ENCODE measurements at regions of chr2 and their contacts with region 1.

Region 1: DNA sequence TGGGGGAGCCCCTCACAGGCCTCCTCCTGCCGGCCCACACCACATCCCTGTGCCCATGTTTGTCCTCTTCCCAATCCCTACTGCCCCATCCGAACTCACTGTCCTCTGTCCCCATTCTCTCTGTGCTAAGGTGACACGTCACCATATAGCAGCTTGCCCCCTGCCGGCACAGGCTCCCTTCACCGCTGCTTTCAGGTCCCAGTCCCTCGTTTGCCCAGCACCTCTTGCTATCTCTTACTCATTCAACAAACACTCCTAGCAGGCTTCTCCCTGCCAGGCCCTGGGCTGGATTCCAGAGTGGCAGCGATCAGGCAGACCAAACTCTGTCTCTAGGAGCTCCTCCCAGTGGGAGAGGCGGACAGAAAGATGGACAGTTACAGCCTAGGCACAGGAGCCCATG is 74.3 kb downstream of the TFCP2L1 start:
- DNase-seq: peak; percentile 70 to 72
- H3K4me3 ChIP-seq: no peak overlapping the region
- H3K4me3 Mint-ChIP-seq: peak overlapping the region; percentile 42
- H3K27ac Mint-ChIP-seq: peak overlapping the region; percentile 51
- H3K4me1 ChIP-seq: peaks cover 40% of the 10 kb centered on the region
- H3K4me1 Mint-ChIP-seq: peaks cover 29% of the 10 kb centered on the region
- H3K27me3 ChIP-seq: no peaks in the 10 kb centered on the region
- H3K27me3 Mint-ChIP-seq: no peaks in the 10 kb centered on the region
- CTCF ChIP-seq: peak; percentile 21 to 37

Region 2: DNA sequence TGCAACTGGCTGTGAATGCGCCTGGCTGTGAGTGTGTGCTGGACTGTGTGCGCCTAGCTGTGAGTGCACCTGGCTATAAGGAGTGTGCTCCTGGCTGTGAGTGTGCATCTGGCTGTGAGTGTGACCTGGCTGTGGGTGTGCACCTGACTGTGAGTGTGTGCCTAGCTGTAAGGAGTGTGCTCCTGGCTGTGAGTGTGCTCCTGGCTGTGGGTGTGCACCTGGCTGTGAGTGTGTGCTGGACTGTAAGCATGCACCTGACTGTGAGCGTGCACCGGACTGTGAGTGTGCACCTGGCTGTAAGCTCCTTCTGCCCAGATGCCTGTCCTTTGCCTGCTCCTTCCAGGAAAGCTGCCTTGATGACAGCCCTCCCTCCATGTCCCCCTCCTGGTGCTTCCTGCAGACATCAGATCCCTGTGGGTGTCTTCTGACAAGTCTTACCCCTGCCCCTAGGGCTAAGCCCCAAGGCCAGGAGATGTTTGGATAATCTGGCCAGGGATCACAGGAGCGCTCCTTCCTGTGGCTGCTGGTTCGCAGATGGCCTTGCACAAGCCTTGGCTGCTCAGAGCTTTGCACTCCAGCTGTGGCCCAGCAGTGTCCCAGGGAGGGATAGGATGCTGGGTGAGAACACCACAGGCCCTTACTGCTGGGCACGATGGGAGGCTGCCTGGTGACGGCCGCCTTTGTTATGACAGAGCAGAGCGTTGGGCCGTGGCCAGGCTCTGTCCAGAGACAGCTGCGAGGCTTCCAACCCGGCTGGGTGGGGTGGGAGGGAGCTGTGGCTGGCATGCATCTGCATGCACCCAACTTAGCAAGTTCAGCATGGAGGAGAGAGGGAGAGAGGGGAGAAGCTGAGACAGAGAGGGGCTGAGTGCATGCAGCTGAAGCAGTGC is 385.1 kb before region 1 on chr2:
- CTCF ChIA-PET with region 1: no interaction called
- POLR2A ChIA-PET with region 1: no interaction called
- intact Hi-C with region 1: no loop called
- DNase-seq: no peak
- H3K4me3 ChIP-seq: no peak overlapping the region
- H3K4me3 Mint-ChIP-seq: no peak overlapping the region
- H3K27ac Mint-ChIP-seq: no peak overlapping the region
- H3K4me1 ChIP-seq: no peaks in the 10 kb centered on the region
- H3K4me1 Mint-ChIP-seq: no peaks in the 10 kb centered on the region
- H3K27me3 ChIP-seq: no peaks in the 10 kb centered on the region
- H3K27me3 Mint-ChIP-seq: no peaks in the 10 kb centered on the region
- CTCF ChIP-seq: no peak

Region 3: GRCh38 chr2:121185571-121186074 is 25.1 kb before region 1 on chr2:
- CTCF ChIA-PET with region 1: interaction called, 6 read pairs
- POLR2A ChIA-PET with region 1: no interaction called
- intact Hi-C with region 1: loop called (anchors 2 kb)
- DNase-seq: no peak
- H3K4me3 ChIP-seq: no peak overlapping the region
- H3K4me3 Mint-ChIP-seq: no peak overlapping the region
- H3K27ac Mint-ChIP-seq: no peak overlapping the region
- H3K4me1 ChIP-seq: no peaks in the 10 kb centered on the region
- H3K4me1 Mint-ChIP-seq: no peaks in the 10 kb centered on the region
- H3K27me3 ChIP-seq: no peaks in the 10 kb centered on the region
- H3K27me3 Mint-ChIP-seq: no peaks in the 10 kb centered on the region
- CTCF ChIP-seq: no peak

Region 4: DNA sequence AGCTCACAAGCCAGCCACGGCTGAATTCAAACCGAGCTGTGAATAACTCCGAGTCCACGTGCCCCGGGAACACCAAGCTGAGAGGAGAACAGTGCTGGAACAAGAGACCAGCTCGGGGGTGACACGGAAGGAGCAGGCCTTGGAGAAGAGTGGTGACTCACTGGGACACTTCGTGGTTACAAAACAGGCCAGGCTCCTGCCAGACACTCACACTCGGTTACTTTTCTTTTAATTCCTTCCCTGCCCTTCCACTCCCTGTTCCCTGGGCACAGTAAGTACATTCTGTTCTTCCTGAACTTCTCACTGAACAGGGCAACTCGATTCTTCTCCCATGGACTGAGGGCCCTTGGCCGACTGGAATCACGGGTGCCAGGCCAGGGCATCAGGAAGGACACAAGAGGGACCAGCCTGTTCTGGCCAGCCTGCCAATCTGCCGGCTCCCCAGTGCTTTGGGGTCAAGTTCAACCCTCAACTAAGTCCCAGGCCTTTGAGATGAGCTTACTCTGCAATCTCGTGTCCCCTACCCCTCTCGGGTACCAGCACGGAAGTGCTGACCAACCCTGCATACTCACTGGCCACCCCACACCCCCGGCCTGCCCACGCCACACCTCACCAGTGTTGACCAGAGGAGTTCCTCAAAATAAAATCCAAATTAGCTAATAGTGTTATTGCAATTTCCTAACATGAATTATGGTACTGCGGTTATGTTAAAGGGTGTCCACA is 13.2 kb before region 1 on chr2:
- CTCF ChIA-PET with region 1: no interaction called
- POLR2A ChIA-PET with region 1: no interaction called
- intact Hi-C with region 1: no loop called
- DNase-seq: no peak
- H3K4me3 ChIP-seq: no peak overlapping the region
- H3K4me3 Mint-ChIP-seq: no peak overlapping the region
- H3K27ac Mint-ChIP-seq: no peak overlapping the region
- H3K4me1 ChIP-seq: no peaks in the 10 kb centered on the region
- H3K4me1 Mint-ChIP-seq: peaks cover 5% of the 10 kb centered on the region
- H3K27me3 ChIP-seq: no peaks in the 10 kb centered on the region
- H3K27me3 Mint-ChIP-seq: no peaks in the 10 kb centered on the region
- CTCF ChIP-seq: no peak

Region 5: GRCh38 chr2:121272581-121273515 is 62.2 kb after region 1 on chr2:
- CTCF ChIA-PET with region 1: no interaction called
- POLR2A ChIA-PET with region 1: no interaction called
- intact Hi-C with region 1: loop called (anchors 1 kb)
- DNase-seq: peak; percentile 66 to 78
- H3K4me3 ChIP-seq: no peak overlapping the region
- H3K4me3 Mint-ChIP-seq: peak overlapping the region; percentile 37
- H3K27ac Mint-ChIP-seq: peak overlapping the region; percentile 68
- H3K4me1 ChIP-seq: peaks cover 33% of the 10 kb centered on the region
- H3K4me1 Mint-ChIP-seq: peaks cover 18% of the 10 kb centered on the region
- H3K27me3 ChIP-seq: no peaks in the 10 kb centered on the region
- H3K27me3 Mint-ChIP-seq: no peaks in the 10 kb centered on the region
- CTCF ChIP-seq: no peak

Region 6: GRCh38 chr2:121283670-121284462 is 73.2 kb after region 1 on chr2:
- CTCF ChIA-PET with region 1: no interaction called
- POLR2A ChIA-PET with region 1: no interaction called
- intact Hi-C with region 1: loop called (anchors 1 kb)
- DNase-seq: no peak
- H3K4me3 ChIP-seq: peak overlapping the region; percentile 59
- H3K4me3 Mint-ChIP-seq: peak overlapping the region; percentile 90
- H3K27ac Mint-ChIP-seq: peak overlapping the region; percentile 55
- H3K4me1 ChIP-seq: peaks cover 12% of the 10 kb centered on the region
- H3K4me1 Mint-ChIP-seq: peaks cover 9% of the 10 kb centered on the region
- H3K27me3 ChIP-seq: no peaks in the 10 kb centered on the region
- H3K27me3 Mint-ChIP-seq: no peaks in the 10 kb centered on the region
- CTCF ChIP-seq: no peak

Region 7: GRCh38 chr2:121333834-121334558 is 123.3 kb after region 1 on chr2:
- CTCF ChIA-PET with region 1: interaction called, 3 read pairs
- POLR2A ChIA-PET with region 1: no interaction called
- intact Hi-C with region 1: loop called (anchors 2 kb)
- DNase-seq: no peak
- H3K4me3 ChIP-seq: no peak overlapping the region
- H3K4me3 Mint-ChIP-seq: no peak overlapping the region
- H3K27ac Mint-ChIP-seq: peak overlapping the region; percentile 83
- H3K4me1 ChIP-seq: peaks cover 23% of the 10 kb centered on the region
- H3K4me1 Mint-ChIP-seq: peaks cover 14% of the 10 kb centered on the region
- H3K27me3 ChIP-seq: no peaks in the 10 kb centered on the region
- H3K27me3 Mint-ChIP-seq: no peaks in the 10 kb centered on the region
- CTCF ChIP-seq: no peak

Region 8: GRCh38 chr2:121356058-121356640 is 145.5 kb after region 1 on chr2:
- CTCF ChIA-PET with region 1: interaction called, 16 read pairs
- POLR2A ChIA-PET with region 1: interaction called, 3 read pairs
- intact Hi-C with region 1: no loop called
- DNase-seq: peak; percentile 59 to 72
- H3K4me3 ChIP-seq: no peak overlapping the region
- H3K4me3 Mint-ChIP-seq: no peak overlapping the region
- H3K27ac Mint-ChIP-seq: no peak overlapping the region
- H3K4me1 ChIP-seq: 0 out of 2 replicates have a peak, but pooled peaks cover 6% of the 10 kb centered on the region
- H3K4me1 Mint-ChIP-seq: peaks cover 17% of the 10 kb centered on the region
- H3K27me3 ChIP-seq: no peaks in the 10 kb centered on the region
- H3K27me3 Mint-ChIP-seq: no peaks in the 10 kb centered on the region
- CTCF ChIP-seq: peak; percentile 66 to 77

Measured in Caco-2 (cell line).